ENCODE measurements at regions of chr13 and their contacts with region 1.

Region 1: GRCh38 chr13:23921451-23921888 is 24.2 kb upstream of the C1QTNF9B start:
- DNase-seq: peak; percentile 38
- H3K4me3 Mint-ChIP-seq: no peak overlapping the region
- H3K27ac Mint-ChIP-seq: no peak overlapping the region
- H3K4me1 Mint-ChIP-seq: peaks cover 29% of the 10 kb centered on the region
- H3K27me3 Mint-ChIP-seq: no peaks in the 10 kb centered on the region
- CTCF ChIP-seq: peak; percentile 54

Region 2: GRCh38 chr13:23960566-23961156 is 39.2 kb after region 1 on chr13:
- CTCF ChIA-PET with region 1: interaction called, 6 read pairs
- intact Hi-C with region 1: loop called (anchors 1 kb)
- DNase-seq: peak; percentile 54
- H3K4me3 Mint-ChIP-seq: no peak overlapping the region
- H3K27ac Mint-ChIP-seq: no peak overlapping the region
- H3K4me1 Mint-ChIP-seq: peaks cover 27% of the 10 kb centered on the region
- H3K27me3 Mint-ChIP-seq: no peaks in the 10 kb centered on the region
- CTCF ChIP-seq: peak; percentile 41

Region 3: GRCh38 chr13:24005755-24006281 is 84.3 kb after region 1 on chr13:
- CTCF ChIA-PET with region 1: no interaction called
- intact Hi-C with region 1: loop called (anchors 2 kb)
- DNase-seq: no peak
- H3K4me3 Mint-ChIP-seq: no peak overlapping the region
- H3K27ac Mint-ChIP-seq: no peak overlapping the region
- H3K4me1 Mint-ChIP-seq: peaks cover 20% of the 10 kb centered on the region
- H3K27me3 Mint-ChIP-seq: no peaks in the 10 kb centered on the region
- CTCF ChIP-seq: no peak

Region 4: GRCh38 chr13:24012648-24013047 is 91.2 kb after region 1 on chr13:
- CTCF ChIA-PET with region 1: no interaction called
- intact Hi-C with region 1: loop called (anchors 2 kb)
- DNase-seq: peak; percentile 10
- H3K4me3 Mint-ChIP-seq: no peak overlapping the region
- H3K27ac Mint-ChIP-seq: no peak overlapping the region
- H3K4me1 Mint-ChIP-seq: peaks cover 8% of the 10 kb centered on the region
- H3K27me3 Mint-ChIP-seq: no peaks in the 10 kb centered on the region
- CTCF ChIP-seq: no peak

Region 5: DNA sequence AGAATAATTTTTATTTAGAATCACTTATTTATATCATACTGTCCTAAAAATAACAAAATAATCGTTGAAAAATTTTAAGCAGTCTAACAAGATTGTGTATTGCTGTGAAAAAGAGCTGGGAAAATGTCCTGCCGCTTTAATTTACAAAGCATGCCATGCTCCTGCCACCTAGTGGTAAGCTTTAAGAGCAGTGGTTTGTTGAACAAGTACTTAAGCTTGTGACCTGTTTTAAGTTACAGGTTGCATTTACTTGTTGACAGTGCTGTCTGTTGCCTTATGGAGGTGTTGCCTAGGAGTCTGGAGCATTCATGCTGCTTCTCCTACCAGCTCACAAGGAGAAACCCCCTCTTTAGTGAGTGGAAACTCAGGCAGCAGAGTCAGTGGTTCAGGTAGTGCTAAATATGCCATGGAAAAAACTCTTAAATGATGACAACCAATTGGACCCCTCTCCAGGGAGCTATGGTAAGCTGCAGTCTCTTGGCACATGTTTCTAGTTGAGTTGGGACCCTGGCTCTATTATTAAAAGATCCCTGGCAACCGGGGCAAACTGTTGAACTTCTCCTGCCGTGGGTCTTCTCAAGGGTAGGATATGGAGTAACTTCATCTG is 307.5 kb after region 1 on chr13:
- CTCF ChIA-PET with region 1: interaction called, 4 read pairs
- intact Hi-C with region 1: loop called (anchors 2 kb)
- DNase-seq: peak; percentile 28
- H3K4me3 Mint-ChIP-seq: no peak overlapping the region
- H3K27ac Mint-ChIP-seq: no peak overlapping the region
- H3K4me1 Mint-ChIP-seq: no peaks in the 10 kb centered on the region
- H3K27me3 Mint-ChIP-seq: no peaks in the 10 kb centered on the region
- CTCF ChIP-seq: peak; percentile 44

Region 6: DNA sequence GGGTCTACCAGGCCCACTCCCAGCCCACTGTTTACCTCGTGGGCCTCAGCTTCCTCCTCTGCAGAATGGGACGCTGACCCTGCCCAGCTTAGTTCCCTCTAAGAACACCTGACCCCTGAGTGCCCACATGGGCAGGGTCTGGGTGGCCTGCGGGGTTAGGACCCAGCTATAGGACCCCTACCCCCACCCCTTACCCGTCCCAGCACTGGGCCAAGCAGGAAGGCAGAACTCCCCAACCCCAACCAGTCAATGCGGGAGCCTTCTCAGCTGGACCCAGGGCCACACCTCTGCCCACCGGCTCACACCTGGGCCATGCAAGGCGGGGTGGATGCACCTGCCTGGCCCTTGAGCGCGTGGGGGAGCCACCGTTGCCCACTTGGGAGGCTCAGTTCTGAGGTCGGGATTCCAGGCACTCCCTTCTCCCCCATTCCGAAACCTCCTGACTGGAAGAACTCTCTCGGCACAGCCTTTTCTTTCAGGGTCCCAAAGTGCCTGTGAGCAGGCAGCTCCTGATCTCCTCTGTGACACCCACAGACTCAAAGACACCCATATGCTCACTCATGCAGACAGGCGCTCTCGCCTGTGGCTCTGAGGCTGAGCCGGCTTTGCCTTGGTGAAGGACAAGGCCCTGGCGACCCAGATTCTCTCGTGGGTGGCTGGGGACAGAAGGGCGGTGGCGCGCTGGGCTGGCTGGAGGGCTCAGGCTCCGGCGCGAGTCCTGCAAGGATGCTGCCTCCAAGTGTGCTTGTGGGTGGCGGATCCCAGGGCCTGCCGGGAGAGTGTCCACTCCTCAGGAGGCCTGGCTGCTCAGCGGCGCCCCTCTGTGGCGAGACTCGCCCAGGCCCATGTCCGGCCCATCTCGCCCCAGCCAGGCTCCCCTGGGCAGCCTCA is 619.0 kb after region 1 on chr13:
- CTCF ChIA-PET with region 1: no interaction called
- intact Hi-C with region 1: no loop called
- DNase-seq: peak; percentile 11
- H3K4me3 Mint-ChIP-seq: no peak overlapping the region
- H3K27ac Mint-ChIP-seq: no peak overlapping the region
- H3K4me1 Mint-ChIP-seq: no peaks in the 10 kb centered on the region
- H3K27me3 Mint-ChIP-seq: peaks cover 28% of the 10 kb centered on the region
- CTCF ChIP-seq: peak; percentile 27

Measured in Calu3 (cell line).